GM12878 (cell line): ENCODE measurements at regions of chr15 and their contacts with region 1.

Region 1: GRCh38 chr15:45457641-45458433 is 64.7 kb downstream of the SLC30A4 start:
- DNase-seq: peak; percentile 69
- ATAC-seq: peak; percentile 72
- H3K4me3 ChIP-seq: peak overlapping the region; percentile 69
- H3K27ac ChIP-seq: peak overlapping the region; percentile 30
- H3K4me1 ChIP-seq: peaks cover 24% of the 10 kb centered on the region
- H3K27me3 ChIP-seq: no peaks in the 10 kb centered on the region
- CTCF ChIP-seq: peak; percentile 57 to 87 (median 62); a peak in 5 of 6 replicates
- EP300 ChIP-seq: no peak
- POLR2A ChIP-seq: no peak
- RAD21 ChIP-seq: peak; percentile 95

Region 2: DNA sequence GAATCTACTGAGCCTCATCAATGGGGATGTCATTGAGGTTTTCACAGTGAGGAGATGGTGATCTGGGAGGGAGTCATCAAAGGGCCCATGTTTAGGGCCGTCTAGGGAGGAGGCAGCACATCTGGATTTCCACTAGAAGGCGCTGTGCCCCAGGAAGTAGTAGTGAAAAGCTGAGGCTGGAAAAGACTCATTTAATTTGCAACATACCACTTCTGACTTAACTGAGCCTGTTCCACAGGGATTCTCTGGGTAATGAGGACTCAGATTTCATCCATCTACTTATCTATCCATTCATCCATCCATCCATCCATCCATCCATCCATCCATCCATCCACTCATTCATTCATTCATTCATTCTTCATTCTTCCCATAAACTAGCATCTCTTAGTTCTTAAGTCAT is 252.6 kb before region 1 on chr15:
- CTCF ChIA-PET with region 1: interaction called, 31 read pairs
- POLR2A ChIA-PET with region 1: interaction called, 3 read pairs
- RAD21 ChIA-PET with region 1: interaction called, 5 read pairs
- SMC1A ChIA-PET with region 1: interaction called, 9 read pairs
- in situ Hi-C with region 1: no loop called
- intact Hi-C with region 1: loop called (anchors 1 kb)
- DNase-seq: peak; percentile 16
- ATAC-seq: peak; percentile 45
- H3K4me3 ChIP-seq: no peak overlapping the region
- H3K27ac ChIP-seq: no peak overlapping the region
- H3K4me1 ChIP-seq: no peaks in the 10 kb centered on the region; the same call in none of the 2 replicates
- H3K27me3 ChIP-seq: no peaks in the 10 kb centered on the region
- CTCF ChIP-seq: peak; percentile 90 to 94 (median 92)
- EP300 ChIP-seq: no peak
- POLR2A ChIP-seq: no peak
- RAD21 ChIP-seq: peak; percentile 87

Region 3: DNA sequence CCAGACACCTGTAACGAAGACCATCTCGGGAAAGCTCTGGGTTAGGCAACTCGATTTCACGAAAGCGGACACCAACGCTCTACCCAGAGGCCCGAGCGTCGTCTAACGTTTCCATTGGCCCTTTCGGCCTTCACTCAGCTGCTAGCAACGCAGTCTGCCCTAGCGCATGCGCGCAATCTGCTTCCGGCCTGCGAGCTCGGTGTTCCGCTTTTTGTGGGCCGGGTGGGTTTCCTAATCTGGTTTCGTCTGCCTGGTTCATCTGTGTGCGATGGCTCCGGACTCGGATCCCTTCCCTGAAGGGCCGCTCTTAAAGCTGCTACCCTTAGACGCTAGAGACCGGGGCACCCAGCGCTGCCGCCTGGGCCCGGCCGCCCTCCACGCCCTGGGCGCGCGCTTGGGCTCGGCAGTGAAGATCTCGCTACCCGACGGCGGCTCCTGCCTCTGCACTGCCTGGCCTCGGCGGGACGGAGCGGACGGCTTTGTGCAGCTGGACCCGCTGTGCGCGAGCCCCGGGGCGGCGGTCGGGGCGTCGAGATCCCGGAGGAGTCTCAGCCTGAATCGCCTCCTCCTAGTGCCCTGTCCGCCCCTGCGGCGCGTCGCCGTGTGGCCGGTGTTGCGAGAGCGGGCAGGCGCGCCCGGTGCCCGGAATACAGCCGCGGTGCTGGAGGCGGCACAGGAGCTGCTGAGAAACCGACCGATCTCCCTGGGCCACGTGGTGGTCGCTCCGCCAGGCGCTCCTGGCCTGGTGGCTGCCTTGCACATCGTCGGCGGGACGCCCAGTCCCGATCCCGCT is 55.5 kb before region 1 on chr15:
- CTCF ChIA-PET with region 1: interaction called, 16 read pairs
- POLR2A ChIA-PET with region 1: no interaction called
- RAD21 ChIA-PET with region 1: interaction called, 5 read pairs
- SMC1A ChIA-PET with region 1: interaction called, 7 read pairs
- in situ Hi-C with region 1: no loop called
- intact Hi-C with region 1: loop called (anchors 10 kb)
- DNase-seq: peak; percentile 98
- ATAC-seq: peak; percentile 92
- H3K4me3 ChIP-seq: peak overlapping the region; percentile 83
- H3K27ac ChIP-seq: peak overlapping the region; percentile 89
- H3K4me1 ChIP-seq: peaks cover 6% of the 10 kb centered on the region; the same call in 1 of the 2 replicates
- H3K27me3 ChIP-seq: no peaks in the 10 kb centered on the region
- CTCF ChIP-seq: no peak
- EP300 ChIP-seq: no peak
- POLR2A ChIP-seq: peak; percentile 89
- RAD21 ChIP-seq: no peak

Region 4: GRCh38 chr15:45442500-45443135 is 15.2 kb before region 1 on chr15:
- CTCF ChIA-PET with region 1: interaction called, 23 read pairs
- POLR2A ChIA-PET with region 1: no interaction called
- RAD21 ChIA-PET with region 1: interaction called, 6 read pairs
- SMC1A ChIA-PET with region 1: interaction called, 10 read pairs
- in situ Hi-C with region 1: no loop called
- intact Hi-C with region 1: no loop called
- DNase-seq: no peak
- ATAC-seq: no peak
- H3K4me3 ChIP-seq: no peak overlapping the region
- H3K27ac ChIP-seq: no peak overlapping the region
- H3K4me1 ChIP-seq: peaks cover 8% of the 10 kb centered on the region; the same call in 1 of the 2 replicates
- H3K27me3 ChIP-seq: no peaks in the 10 kb centered on the region
- CTCF ChIP-seq: no peak
- EP300 ChIP-seq: no peak
- POLR2A ChIP-seq: no peak
- RAD21 ChIP-seq: no peak

Region 5: GRCh38 chr15:45604326-45604725 is 146.5 kb after region 1 on chr15:
- CTCF ChIA-PET with region 1: interaction called, 42 read pairs
- POLR2A ChIA-PET with region 1: no interaction called
- RAD21 ChIA-PET with region 1: interaction called, 5 read pairs
- SMC1A ChIA-PET with region 1: interaction called, 7 read pairs
- in situ Hi-C with region 1: no loop called
- intact Hi-C with region 1: no loop called
- DNase-seq: no peak
- ATAC-seq: no peak
- H3K4me3 ChIP-seq: no peak overlapping the region
- H3K27ac ChIP-seq: peak overlapping the region; percentile 40
- H3K4me1 ChIP-seq: peaks cover 14% of the 10 kb centered on the region
- H3K27me3 ChIP-seq: no peaks in the 10 kb centered on the region
- CTCF ChIP-seq: no peak
- EP300 ChIP-seq: no peak
- POLR2A ChIP-seq: no peak
- RAD21 ChIP-seq: no peak

Region 6: DNA sequence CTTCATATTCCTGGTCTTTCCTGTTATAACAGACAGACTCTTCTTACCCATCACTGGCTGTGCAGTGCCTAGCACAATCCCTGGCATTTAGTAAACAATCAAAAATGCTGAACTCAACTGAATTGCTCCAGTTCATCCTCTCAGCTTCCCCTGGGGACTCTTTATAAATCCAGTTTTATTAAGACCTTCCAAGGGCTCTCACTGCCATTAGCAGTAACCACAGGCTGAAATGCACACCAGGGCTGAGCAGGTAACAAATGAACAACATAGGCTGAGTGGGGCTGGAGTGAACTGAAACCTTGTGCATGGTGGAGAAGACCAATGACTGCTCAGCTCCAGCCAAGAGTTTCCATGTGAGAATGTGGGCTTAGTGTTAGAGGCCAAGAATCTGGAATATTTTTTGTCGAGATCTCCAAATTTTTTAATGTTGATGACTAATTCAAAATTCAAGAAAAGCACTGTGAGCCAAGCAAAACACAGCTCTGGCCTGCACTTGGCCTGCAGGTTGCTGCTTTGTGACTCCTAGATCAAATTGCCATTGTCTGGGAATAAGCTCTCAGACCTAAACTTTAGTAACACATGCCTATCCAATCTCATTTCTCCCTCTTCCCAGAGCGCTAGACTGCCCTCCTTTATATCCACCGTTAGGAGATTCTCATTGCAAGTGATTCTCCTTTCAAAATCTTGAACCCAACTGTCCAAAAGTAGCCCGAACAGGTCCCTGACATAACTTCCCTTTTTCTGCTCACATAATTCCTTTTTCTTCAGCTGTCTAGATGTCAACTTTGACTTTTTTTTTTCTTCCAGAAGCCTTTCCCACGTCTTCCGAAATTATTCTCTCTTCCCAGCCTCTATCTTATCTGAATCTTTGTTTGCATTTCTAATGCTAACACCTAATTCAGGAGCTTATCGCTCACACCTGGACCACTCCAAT is 184.4 kb after region 1 on chr15:
- CTCF ChIA-PET with region 1: interaction called, 10 read pairs
- POLR2A ChIA-PET with region 1: no interaction called
- RAD21 ChIA-PET with region 1: interaction called, 4 read pairs
- SMC1A ChIA-PET with region 1: interaction called, 3 read pairs
- in situ Hi-C with region 1: no loop called
- intact Hi-C with region 1: no loop called
- DNase-seq: no peak
- ATAC-seq: no peak
- H3K4me3 ChIP-seq: no peak overlapping the region
- H3K27ac ChIP-seq: no peak overlapping the region
- H3K4me1 ChIP-seq: peaks cover 24% of the 10 kb centered on the region
- H3K27me3 ChIP-seq: no peaks in the 10 kb centered on the region
- CTCF ChIP-seq: no peak
- EP300 ChIP-seq: no peak
- POLR2A ChIP-seq: no peak
- RAD21 ChIP-seq: no peak

Region 7: GRCh38 chr15:45684370-45684939 is 226.6 kb after region 1 on chr15:
- CTCF ChIA-PET with region 1: no interaction called
- POLR2A ChIA-PET with region 1: no interaction called
- RAD21 ChIA-PET with region 1: no interaction called
- SMC1A ChIA-PET with region 1: no interaction called
- in situ Hi-C with region 1: no loop called
- intact Hi-C with region 1: no loop called
- DNase-seq: no peak
- ATAC-seq: no peak
- H3K4me3 ChIP-seq: no peak overlapping the region
- H3K27ac ChIP-seq: no peak overlapping the region
- H3K4me1 ChIP-seq: no peaks in the 10 kb centered on the region
- H3K27me3 ChIP-seq: no peaks in the 10 kb centered on the region
- CTCF ChIP-seq: no peak
- EP300 ChIP-seq: no peak
- POLR2A ChIP-seq: no peak
- RAD21 ChIP-seq: no peak